HCT116 (cell line): ENCODE measurements at regions of chr11 and their contacts with region 1.

Region 1: DNA sequence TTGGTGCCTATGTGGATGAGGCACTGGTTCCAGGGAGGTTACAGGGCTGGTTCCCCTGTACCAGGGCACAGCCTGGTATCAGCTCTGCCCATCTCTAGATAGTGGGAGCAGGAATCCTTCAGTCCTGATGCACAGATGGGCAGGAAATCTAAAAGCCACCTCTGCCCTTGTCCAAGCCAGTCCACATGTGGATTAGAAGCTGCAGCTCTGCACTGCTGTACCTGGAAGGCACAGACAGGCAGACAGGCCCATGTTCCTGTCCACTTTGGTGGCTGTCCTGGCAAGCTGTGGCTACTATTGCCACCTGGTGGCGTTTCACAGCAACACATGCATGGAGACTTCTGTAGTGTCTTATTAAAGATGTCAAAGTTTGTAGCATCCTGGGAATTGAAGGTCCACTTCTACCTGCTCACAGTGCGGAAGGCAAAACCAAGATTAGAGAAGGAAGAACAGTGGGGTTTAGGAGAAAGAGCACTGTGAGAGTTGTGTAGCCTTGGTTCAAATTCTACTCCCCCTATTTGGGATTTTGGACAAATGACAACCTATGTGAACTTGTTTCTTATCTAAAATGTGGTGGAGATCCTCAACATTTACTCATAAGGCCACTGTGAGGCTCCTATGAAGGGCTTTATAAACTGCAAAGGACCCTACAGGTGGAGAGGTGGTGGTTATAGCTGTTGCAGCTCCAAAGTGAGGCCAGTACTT is 30.1 kb downstream of the NAV2 start:
- DNase-seq: peak; percentile 51
- ATAC-seq: peak; percentile 97
- H3K4me3 ChIP-seq: no peak overlapping the region
- H3K27ac ChIP-seq: no peak overlapping the region
- H3K4me1 ChIP-seq: no peaks in the 10 kb centered on the region
- H3K27me3 ChIP-seq: no peaks in the 10 kb centered on the region
- CTCF ChIP-seq: peak; percentile 81 to 90 (median 88); a peak in 5 of 6 replicates
- POLR2A ChIP-seq: no peak
- RAD21 ChIP-seq: peak; percentile 96

Region 2: DNA sequence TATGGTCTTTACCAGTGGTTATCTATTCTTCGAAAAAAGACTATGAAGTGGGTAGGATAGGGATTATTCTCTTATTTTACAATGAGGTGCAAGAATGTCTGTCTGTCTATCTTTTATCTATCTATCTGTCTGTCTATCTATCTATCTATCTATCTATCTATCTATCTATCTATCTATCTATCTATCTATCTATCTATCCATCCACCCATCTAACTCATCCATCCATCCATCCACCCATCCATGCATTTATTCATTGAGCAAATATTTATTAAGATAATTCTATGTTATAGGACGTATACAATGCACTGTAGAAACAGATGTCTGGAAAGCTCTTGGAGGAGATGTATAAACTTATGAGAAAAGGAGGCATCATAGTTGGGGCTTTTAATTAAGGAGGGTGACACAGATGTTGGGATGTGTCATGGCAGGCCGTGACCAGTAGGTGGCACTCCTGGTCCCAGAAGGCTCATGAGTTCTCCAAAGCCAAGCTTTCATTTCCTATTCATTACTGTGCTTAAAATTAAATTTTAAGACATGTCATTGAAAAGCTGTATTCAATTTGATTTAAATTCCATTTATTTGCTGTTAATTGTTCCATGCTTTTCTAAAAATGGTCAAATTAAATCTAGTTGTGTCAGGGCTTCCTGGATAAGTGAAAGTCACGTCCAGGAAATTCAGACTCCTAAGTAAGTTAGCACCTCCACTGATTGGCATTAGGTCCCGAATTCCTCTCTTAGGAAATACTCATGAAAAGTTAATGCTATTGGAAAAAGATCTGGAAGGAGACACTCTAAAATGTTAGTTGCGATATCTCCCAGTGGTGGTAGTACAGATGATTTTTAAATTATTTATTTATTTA is 483.0 kb before region 1 on chr11:
- CTCF ChIA-PET with region 1: no interaction called
- POLR2A ChIA-PET with region 1: no interaction called
- RAD21 ChIA-PET with region 1: no interaction called
- intact Hi-C with region 1: loop called (anchors 10 kb)
- DNase-seq: peak; percentile 24
- ATAC-seq: peak; percentile 88
- H3K4me3 ChIP-seq: peak overlapping the region in 1 of 2 experiments; percentile 8; a peak in 1 of 4 replicates
- H3K27ac ChIP-seq: no peak overlapping the region
- H3K4me1 ChIP-seq: no peaks in the 10 kb centered on the region
- H3K27me3 ChIP-seq: no peaks in the 10 kb centered on the region
- CTCF ChIP-seq: peak; percentile 71 to 95 (median 90); a peak in 5 of 6 replicates
- POLR2A ChIP-seq: no peak
- RAD21 ChIP-seq: peak; percentile 70

Region 3: GRCh38 chr11:19561011-19561410 is 181.7 kb before region 1 on chr11:
- CTCF ChIA-PET with region 1: interaction called, 80 read pairs
- POLR2A ChIA-PET with region 1: no interaction called
- RAD21 ChIA-PET with region 1: interaction called, 4 to 6 read pairs
- intact Hi-C with region 1: loop called (anchors 1 kb)
- DNase-seq: no peak
- ATAC-seq: no peak
- H3K4me3 ChIP-seq: no peak overlapping the region
- H3K27ac ChIP-seq: no peak overlapping the region
- H3K4me1 ChIP-seq: peaks cover 0 to 6% of the 10 kb centered on the region in 2 experiments; a peak in 1 of 4 replicates
- H3K27me3 ChIP-seq: peaks cover 13% of the 10 kb centered on the region; the same call in 1 of the 2 replicates
- CTCF ChIP-seq: no peak
- POLR2A ChIP-seq: no peak
- RAD21 ChIP-seq: no peak

Region 4: DNA sequence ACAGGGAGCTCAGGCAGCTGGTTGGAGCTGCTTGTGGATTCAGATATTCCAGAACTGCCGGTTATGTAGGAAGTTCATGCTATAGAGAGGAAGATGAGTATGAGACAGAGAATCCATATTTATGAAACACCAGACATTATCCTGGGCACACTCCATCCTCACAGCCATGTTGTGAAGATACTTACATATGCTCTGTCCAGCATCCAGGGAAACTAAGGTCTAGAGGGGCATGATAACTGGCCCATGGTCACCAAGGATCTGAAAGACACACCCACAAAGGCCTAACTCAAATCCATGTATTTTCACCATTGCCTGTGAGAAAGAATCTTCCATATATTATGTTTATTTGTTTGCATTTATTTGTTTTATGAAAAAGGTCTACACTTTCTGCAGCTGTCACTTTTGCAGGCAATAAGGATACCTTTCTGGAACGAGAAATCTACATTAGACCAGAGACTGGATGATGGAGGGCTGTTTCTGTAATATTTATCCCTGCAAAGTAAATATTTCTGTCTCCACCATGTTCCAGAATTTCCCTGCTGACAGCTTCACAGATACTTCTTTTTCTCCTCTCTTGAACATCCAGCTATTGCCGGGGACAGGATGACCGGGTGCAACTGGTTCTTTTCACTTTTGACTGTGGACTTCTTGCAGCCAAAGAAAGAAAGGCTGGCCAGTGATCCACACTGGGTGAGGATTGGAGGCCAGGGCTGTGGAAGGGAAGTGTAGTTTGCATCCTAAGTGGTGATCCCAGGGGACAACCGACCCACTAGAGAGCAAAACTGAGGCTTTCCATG is 176.0 kb before region 1 on chr11:
- CTCF ChIA-PET with region 1: interaction called, 80 read pairs
- POLR2A ChIA-PET with region 1: no interaction called
- RAD21 ChIA-PET with region 1: interaction called, 4 to 6 read pairs
- intact Hi-C with region 1: loop called (anchors 1 kb)
- DNase-seq: no peak
- ATAC-seq: no peak
- H3K4me3 ChIP-seq: no peak overlapping the region
- H3K27ac ChIP-seq: no peak overlapping the region
- H3K4me1 ChIP-seq: peaks cover 0 to 6% of the 10 kb centered on the region in 2 experiments; a peak in 1 of 4 replicates
- H3K27me3 ChIP-seq: peaks cover 5% of the 10 kb centered on the region; the same call in 1 of the 2 replicates
- CTCF ChIP-seq: no peak
- POLR2A ChIP-seq: no peak
- RAD21 ChIP-seq: no peak

Region 5: GRCh38 chr11:19903620-19904069 is 160.9 kb after region 1 on chr11:
- CTCF ChIA-PET with region 1: interaction called, 11 read pairs
- POLR2A ChIA-PET with region 1: no interaction called
- RAD21 ChIA-PET with region 1: interaction called in 1 of 2 experiments, 3 read pairs
- intact Hi-C with region 1: loop called (anchors 1 kb)
- DNase-seq: peak; percentile 62
- ATAC-seq: peak; percentile 90
- H3K4me3 ChIP-seq: no peak overlapping the region
- H3K27ac ChIP-seq: no peak overlapping the region
- H3K4me1 ChIP-seq: peaks cover 3 to 4% of the 10 kb centered on the region in 2 experiments; a peak in 3 of 4 replicates
- H3K27me3 ChIP-seq: no peaks in the 10 kb centered on the region
- CTCF ChIP-seq: peak; percentile 73 to 85 (median 76); a peak in 5 of 6 replicates
- POLR2A ChIP-seq: no peak
- RAD21 ChIP-seq: peak; percentile 85